ENCODE measurements at regions of chr3 and their contacts with region 1.

Region 1: DNA sequence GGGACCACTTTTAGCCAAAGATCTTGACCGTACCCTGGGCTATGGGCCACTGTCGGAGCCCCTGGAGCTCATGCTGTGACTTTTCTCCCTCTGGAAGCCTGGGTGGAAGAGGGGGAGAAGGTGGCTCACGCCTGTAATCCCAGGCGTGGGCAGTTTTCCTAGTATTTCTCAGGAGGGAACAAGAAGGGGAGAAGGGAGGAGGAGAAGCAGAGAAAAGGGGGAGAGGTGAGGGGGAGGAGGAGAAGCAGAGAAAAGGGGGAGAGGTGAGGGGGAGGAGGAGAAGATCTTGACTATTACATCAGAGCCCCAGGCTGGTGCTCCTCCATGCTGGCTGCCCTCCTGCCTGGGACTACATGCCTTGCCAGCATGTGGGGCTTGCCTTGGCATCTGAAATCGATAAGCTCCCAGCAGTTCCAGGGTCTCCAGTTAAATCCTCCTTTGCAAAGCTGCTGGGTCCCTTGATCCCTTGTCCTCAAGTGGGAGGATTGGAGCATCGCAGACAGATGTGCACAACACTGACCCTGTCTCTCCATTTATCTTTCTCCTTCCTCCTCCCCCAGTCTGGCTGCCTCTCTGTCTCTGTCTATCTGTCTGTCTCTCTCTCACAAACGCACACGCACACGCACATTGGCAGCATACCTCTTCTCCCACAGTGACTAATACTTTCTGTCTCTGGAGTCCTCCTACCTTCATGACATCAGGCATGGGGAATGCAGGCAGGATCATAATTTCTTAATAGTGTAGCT is 41.6 kb downstream of the MRAS start:
- DNase-seq: peak; percentile 94
- ATAC-seq: peak; percentile 86
- H3K4me3 ChIP-seq: no peak overlapping the region
- H3K27ac ChIP-seq: peak overlapping the region; percentile 18
- H3K4me1 ChIP-seq: peaks cover 12% of the 10 kb centered on the region
- H3K27me3 ChIP-seq: no peaks in the 10 kb centered on the region
- CTCF ChIP-seq: no peak
- POLR2A ChIP-seq: no peak
- RAD21 ChIP-seq: no peak

Region 2: DNA sequence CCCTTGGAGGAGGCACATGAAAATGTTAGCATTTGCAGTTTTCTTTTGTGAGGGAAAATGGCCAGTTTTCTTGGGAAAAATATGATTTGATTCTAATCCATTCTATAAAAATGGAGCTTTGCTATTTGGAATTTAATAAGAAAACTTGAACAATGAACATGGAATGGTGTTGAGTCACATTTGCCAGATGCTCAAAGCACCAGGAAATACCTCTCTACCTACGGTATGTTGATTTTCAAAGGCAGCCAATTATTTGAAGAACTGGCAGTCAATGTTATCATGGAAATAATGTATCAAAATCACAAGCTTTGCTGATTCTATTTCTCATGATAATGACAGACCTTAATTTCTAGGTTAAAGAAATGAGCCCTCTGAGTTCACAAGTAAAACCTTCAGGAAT is 75.3 kb before region 1 on chr3:
- CTCF ChIA-PET with region 1: no interaction called
- POLR2A ChIA-PET with region 1: no interaction called
- dilution Hi-C with region 1: no loop called
- in situ Hi-C with region 1: no loop called
- intact Hi-C with region 1: no loop called
- DNase-seq: peak; percentile 31
- ATAC-seq: no peak
- H3K4me3 ChIP-seq: no peak overlapping the region
- H3K27ac ChIP-seq: no peak overlapping the region
- H3K4me1 ChIP-seq: no peaks in the 10 kb centered on the region
- H3K27me3 ChIP-seq: peaks cover 9% of the 10 kb centered on the region
- CTCF ChIP-seq: no peak
- POLR2A ChIP-seq: no peak
- RAD21 ChIP-seq: no peak

Region 3: DNA sequence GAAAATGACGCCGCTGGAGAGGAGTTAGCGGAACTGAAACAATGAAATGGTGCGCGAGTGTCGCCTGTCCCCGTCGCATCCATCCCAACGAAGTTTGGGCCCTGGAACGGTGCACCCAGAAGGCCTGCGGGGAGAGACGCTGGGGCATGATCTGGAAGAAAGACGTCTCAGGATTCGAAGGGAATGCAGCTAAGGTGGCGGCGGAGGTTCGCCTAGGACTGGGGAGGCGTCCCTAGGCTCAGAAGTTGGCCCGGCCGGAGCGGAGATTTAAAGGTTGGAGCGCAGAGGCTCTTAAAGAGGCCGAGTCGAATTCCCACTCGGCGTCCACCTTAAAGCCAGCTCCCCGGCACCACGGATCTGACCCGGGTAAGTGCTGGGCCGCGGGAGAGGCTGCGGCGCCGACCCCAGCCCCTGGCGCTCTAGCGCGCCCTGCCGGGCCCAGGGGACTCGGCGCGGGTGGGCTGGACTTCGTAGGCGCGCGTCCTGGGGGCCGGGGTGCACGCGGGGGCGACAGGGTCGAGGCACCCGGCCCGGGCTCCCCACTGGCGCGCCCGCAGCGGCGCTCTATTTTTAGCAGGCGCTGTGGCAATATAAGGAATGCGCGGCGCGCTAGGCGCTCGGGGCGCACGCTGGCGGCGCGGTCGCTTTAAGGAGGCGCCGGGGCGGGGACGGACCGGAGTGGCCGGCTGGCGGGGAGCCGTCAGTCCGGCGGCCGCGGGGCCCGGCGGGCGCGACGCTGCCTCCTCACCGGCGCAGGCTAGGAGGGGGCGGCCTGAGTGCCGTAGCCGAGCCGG is 41.9 kb before region 1 on chr3 and contains the start of gene MRAS:
- CTCF ChIA-PET with region 1: no interaction called
- POLR2A ChIA-PET with region 1: no interaction called
- dilution Hi-C with region 1: no loop called
- in situ Hi-C with region 1: no loop called
- intact Hi-C with region 1: loop called (anchors 5 kb)
- DNase-seq: peak; percentile 73
- ATAC-seq: peak; percentile 78
- H3K4me3 ChIP-seq: peak within 1 kb of the TSS; percentile 84
- H3K27ac ChIP-seq: peak within 1 kb of the TSS; percentile 70
- H3K4me1 ChIP-seq: peaks cover 10% of the 10 kb centered on the region
- H3K27me3 ChIP-seq: no peaks in the 10 kb centered on the region
- CTCF ChIP-seq: peak; percentile 50
- POLR2A ChIP-seq: peak; percentile 79
- RAD21 ChIP-seq: peak; percentile 38
- total RNA-seq, gene MRAS: 56.1 and 59.3 TPM in 2 replicates

Measured in IMR-90 (cell line).